PC-3 (cell line): ENCODE measurements at regions of chr19 and their contacts with region 1.

Region 1: DNA sequence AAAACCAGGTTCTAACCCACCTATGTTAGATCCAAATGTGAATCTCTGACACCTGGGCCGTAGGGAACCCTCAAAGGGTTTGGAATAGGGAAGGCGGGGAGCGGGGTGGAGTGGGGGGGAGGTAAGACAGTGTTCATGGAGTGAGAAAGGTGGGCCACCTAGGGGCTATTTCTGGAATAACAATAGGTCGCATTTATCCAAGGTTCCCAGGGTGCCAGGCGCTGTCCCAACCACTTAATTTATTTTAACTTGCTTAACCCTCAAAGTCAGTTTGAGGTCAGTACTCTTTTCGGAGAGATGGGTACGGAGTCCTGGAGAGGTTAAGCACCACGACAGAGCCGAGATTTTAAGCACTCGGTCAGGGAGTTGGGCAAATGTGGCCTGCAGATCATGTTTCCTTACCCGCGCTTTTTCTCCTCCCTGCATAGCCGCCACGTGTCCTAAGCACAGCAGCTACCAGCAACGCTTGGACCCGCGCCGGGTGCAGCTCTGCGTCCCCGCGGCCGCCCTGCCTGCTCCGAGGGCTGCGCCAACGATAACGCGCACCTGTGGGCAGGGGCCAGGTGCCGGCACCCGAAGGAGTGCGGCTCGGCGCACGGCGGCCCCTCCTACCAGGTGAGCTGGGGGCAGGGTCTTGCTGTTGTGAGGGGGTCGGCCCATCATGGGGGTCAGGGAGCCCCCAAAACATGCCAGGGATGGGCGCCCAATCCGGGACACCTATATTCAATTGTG is 25.0 kb upstream of the FXYD3 start:
- DNase-seq: peak; percentile 75
- ATAC-seq: peak; percentile 87
- H3K4me3 ChIP-seq: peak overlapping the region; percentile 58
- H3K27ac ChIP-seq: no peak overlapping the region
- H3K4me1 ChIP-seq: peaks cover 10% of the 10 kb centered on the region
- H3K27me3 ChIP-seq: no peaks in the 10 kb centered on the region
- CTCF ChIP-seq: peak; percentile 64

Region 2: GRCh38 chr19:35055715-35056179 is 34.9 kb before region 1 on chr19:
- CTCF ChIA-PET with region 1: no interaction called
- POLR2A ChIA-PET with region 1: no interaction called
- intact Hi-C with region 1: loop called (anchors 5 kb)
- DNase-seq: peak; percentile 39
- ATAC-seq: peak; percentile 72
- H3K4me3 ChIP-seq: no peak overlapping the region
- H3K27ac ChIP-seq: no peak overlapping the region
- H3K4me1 ChIP-seq: no peaks in the 10 kb centered on the region
- H3K27me3 ChIP-seq: no peaks in the 10 kb centered on the region
- CTCF ChIP-seq: peak; percentile 60

Region 3: GRCh38 chr19:35066691-35067563 is 23.7 kb before region 1 on chr19:
- CTCF ChIA-PET with region 1: interaction called, 7 read pairs
- POLR2A ChIA-PET with region 1: no interaction called
- intact Hi-C with region 1: loop called (anchors 1 kb)
- DNase-seq: peak; percentile 86
- ATAC-seq: peak; percentile 72
- H3K4me3 ChIP-seq: no peak overlapping the region
- H3K27ac ChIP-seq: no peak overlapping the region
- H3K4me1 ChIP-seq: peaks cover 18% of the 10 kb centered on the region
- H3K27me3 ChIP-seq: no peaks in the 10 kb centered on the region
- CTCF ChIP-seq: peak; percentile 85